Dendritic cell treated with granulocyte-macrophage colony-stimulating factor and Interleukin-4, amounts not matched to agents 40 ng/mL and 50 ng/mL, for 4 days (primary cell): ENCODE measurements at regions of chr4 and their contacts with region 1.

Region 1: GRCh38 chr4:121500861-121501260 is 120.0 kb upstream of the QRFPR start:
- H3K4me3 Mint-ChIP-seq: no peak overlapping the region
- H3K27ac Mint-ChIP-seq: no peak overlapping the region
- H3K4me1 Mint-ChIP-seq: no peaks in the 10 kb centered on the region
- H3K27me3 Mint-ChIP-seq: no peaks in the 10 kb centered on the region

Region 2: GRCh38 chr4:121199742-121200561 is 300.9 kb before region 1 on chr4:
- intact Hi-C with region 1: no loop called
- H3K4me3 Mint-ChIP-seq: no peak overlapping the region
- H3K27ac Mint-ChIP-seq: no peak overlapping the region
- H3K4me1 Mint-ChIP-seq: peaks cover 24% of the 10 kb centered on the region
- H3K27me3 Mint-ChIP-seq: peaks cover 24% of the 10 kb centered on the region

Region 3: GRCh38 chr4:121370729-121371325 is 130.0 kb before region 1 on chr4:
- intact Hi-C with region 1: no loop called
- H3K4me3 Mint-ChIP-seq: no peak overlapping the region
- H3K27ac Mint-ChIP-seq: no peak overlapping the region
- H3K4me1 Mint-ChIP-seq: no peaks in the 10 kb centered on the region
- H3K27me3 Mint-ChIP-seq: peaks cover 7% of the 10 kb centered on the region

Region 4: DNA sequence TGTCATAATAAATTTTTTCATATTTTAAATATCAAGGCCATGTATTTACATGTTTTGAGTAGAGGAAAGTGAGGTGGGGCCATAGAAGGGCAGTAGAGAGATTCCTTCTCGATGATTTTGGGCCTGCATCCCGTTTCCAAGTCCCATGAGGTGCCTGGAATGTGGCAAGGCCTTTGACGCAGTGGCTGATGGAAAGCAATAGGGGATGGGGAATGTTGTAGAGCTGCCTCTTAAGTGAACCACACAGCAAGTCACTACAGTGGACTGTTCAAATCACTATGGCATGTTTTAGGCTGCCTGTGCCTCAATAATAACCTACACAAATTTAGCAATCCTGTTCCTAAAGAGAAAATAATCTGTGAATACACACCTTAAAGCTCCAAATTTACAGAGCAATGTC is 147.7 kb after region 1 on chr4:
- intact Hi-C with region 1: loop called (anchors 10 kb)
- H3K4me3 Mint-ChIP-seq: no peak overlapping the region
- H3K27ac Mint-ChIP-seq: no peak overlapping the region
- H3K4me1 Mint-ChIP-seq: no peaks in the 10 kb centered on the region
- H3K27me3 Mint-ChIP-seq: no peaks in the 10 kb centered on the region